Uterus (tissue), 4 donors: ENCODE measurements at regions of chr20 and their contacts with region 1.

Region 1: GRCh38 chr20:17895641-17896171 is 72.9 kb downstream of the SNX5 start:
- DNase-seq: peak; percentile 81
- H3K4me3 ChIP-seq: peak overlapping the region; percentile 36 to 38
- H3K27ac ChIP-seq: peak overlapping the region; percentile 82 to 88
- H3K4me1 ChIP-seq: no peaks in the 10 kb centered on the region
- H3K27me3 ChIP-seq: no peaks in the 10 kb centered on the region
- CTCF ChIP-seq: peak in 1 of 4 experiments; percentile 5
- POLR2A ChIP-seq: peak in 1 of 2 donors; percentile 39

Region 2: GRCh38 chr20:17680836-17681725 is 214.6 kb before region 1 on chr20:
- intact Hi-C with region 1: loop called (anchors 2 kb)
- DNase-seq: peak; percentile 79 to 84
- H3K4me3 ChIP-seq: peak overlapping the region; percentile 57 to 86
- H3K27ac ChIP-seq: peak overlapping the region; percentile 91 to 94
- H3K4me1 ChIP-seq: peaks cover 0 to 2% of the 10 kb centered on the region in 2 donors
- H3K27me3 ChIP-seq: no peaks in the 10 kb centered on the region
- CTCF ChIP-seq: peak; percentile 21 to 96 (median 88)
- POLR2A ChIP-seq: peak in 1 of 2 donors; percentile 32

Region 3: GRCh38 chr20:17958373-17959256 is 62.9 kb after region 1 on chr20:
- intact Hi-C with region 1: no loop called
- DNase-seq: no peak
- H3K4me3 ChIP-seq: no peak overlapping the region
- H3K27ac ChIP-seq: peak overlapping the region; percentile 57 to 78
- H3K4me1 ChIP-seq: peaks cover 0 to 13% of the 10 kb centered on the region in 2 donors
- H3K27me3 ChIP-seq: no peaks in the 10 kb centered on the region
- CTCF ChIP-seq: peak in 3 of 4 experiments; percentile 14 to 29 (median 25)
- POLR2A ChIP-seq: no peak